PC-3 (cell line): ENCODE measurements at regions of chr4 and their contacts with region 1.

Region 1: DNA sequence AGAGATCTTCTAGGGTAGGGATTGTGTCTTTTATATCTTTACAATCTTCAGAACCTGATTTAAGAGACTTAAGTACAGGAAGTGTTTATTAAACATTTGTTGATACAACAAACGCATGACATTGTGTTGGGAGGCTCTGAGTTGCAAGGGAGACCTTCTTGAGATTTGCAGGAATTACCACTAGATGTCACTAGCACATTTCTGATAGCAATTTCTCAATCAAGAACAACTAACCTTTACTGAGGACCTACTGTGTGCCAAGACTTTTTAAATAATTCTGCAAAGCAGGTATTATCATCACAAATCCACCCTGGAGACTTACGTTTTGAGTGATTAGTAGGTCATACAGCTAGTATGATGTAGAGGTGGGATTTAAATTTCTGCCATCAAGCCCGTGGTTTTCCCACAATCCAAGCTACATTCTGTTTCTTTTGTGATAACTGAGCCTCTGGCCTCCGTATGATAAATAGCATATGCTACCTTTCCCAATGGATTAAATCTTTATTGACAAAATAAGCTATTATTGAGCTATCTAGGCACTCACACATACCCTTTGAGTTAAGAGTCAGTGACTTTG is 986.0 kb downstream of the CCSER1 start:
- DNase-seq: peak; percentile 50
- ATAC-seq: no peak; the same call in 1 of the 2 replicates
- H3K4me3 ChIP-seq: no peak overlapping the region
- H3K27ac ChIP-seq: no peak overlapping the region
- H3K4me1 ChIP-seq: no peaks in the 10 kb centered on the region
- H3K27me3 ChIP-seq: no peaks in the 10 kb centered on the region
- CTCF ChIP-seq: peak; percentile 78

Region 2: GRCh38 chr4:90357117-90357710 is 756.0 kb before region 1 on chr4:
- CTCF ChIA-PET with region 1: no interaction called
- POLR2A ChIA-PET with region 1: no interaction called
- intact Hi-C with region 1: loop called (anchors 5 kb)
- DNase-seq: peak; percentile 58
- ATAC-seq: peak; percentile 54
- H3K4me3 ChIP-seq: no peak overlapping the region; the same call in 1 of the 2 replicates
- H3K27ac ChIP-seq: no peak overlapping the region
- H3K4me1 ChIP-seq: no peaks in the 10 kb centered on the region
- H3K27me3 ChIP-seq: no peaks in the 10 kb centered on the region
- CTCF ChIP-seq: peak; percentile 83

Region 3: DNA sequence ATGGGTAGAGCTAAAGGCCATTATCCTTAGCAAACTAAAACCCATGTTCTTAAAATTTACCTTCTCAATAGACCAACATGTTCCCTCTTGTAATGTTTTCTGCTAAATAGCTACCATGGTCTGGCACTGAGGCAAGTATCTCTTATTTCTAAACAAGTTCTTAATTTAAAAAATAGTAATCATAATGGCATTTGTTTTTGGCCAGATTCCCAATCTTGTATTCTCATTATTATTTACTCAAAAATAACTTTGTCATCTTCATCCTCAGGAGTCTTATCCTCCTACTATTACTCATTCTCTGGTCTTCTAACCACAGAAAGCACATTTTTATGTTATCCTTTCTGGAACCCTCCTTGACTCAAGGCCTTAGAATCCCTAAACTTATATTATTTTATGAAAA is 54.9 kb before region 1 on chr4:
- CTCF ChIA-PET with region 1: no interaction called
- POLR2A ChIA-PET with region 1: no interaction called
- intact Hi-C with region 1: no loop called
- DNase-seq: peak; percentile 75
- ATAC-seq: no peak
- H3K4me3 ChIP-seq: no peak overlapping the region
- H3K27ac ChIP-seq: no peak overlapping the region
- H3K4me1 ChIP-seq: peaks cover 3% of the 10 kb centered on the region; the same call in 1 of the 2 replicates
- H3K27me3 ChIP-seq: no peaks in the 10 kb centered on the region
- CTCF ChIP-seq: no peak

Region 4: GRCh38 chr4:91502365-91502764 is 389.1 kb after region 1 on chr4:
- CTCF ChIA-PET with region 1: no interaction called
- POLR2A ChIA-PET with region 1: no interaction called
- intact Hi-C with region 1: loop called (anchors 1 kb)
- DNase-seq: peak; percentile 45
- ATAC-seq: no peak
- H3K4me3 ChIP-seq: no peak overlapping the region
- H3K27ac ChIP-seq: no peak overlapping the region
- H3K4me1 ChIP-seq: no peaks in the 10 kb centered on the region
- H3K27me3 ChIP-seq: no peaks in the 10 kb centered on the region
- CTCF ChIP-seq: peak; percentile 55

Region 5: GRCh38 chr4:92047209-92047875 is 934.1 kb after region 1 on chr4:
- CTCF ChIA-PET with region 1: no interaction called
- POLR2A ChIA-PET with region 1: no interaction called
- intact Hi-C with region 1: loop called (anchors 5 kb)
- DNase-seq: peak; percentile 38
- ATAC-seq: peak; percentile 61
- H3K4me3 ChIP-seq: no peak overlapping the region
- H3K27ac ChIP-seq: no peak overlapping the region
- H3K4me1 ChIP-seq: no peaks in the 10 kb centered on the region
- H3K27me3 ChIP-seq: no peaks in the 10 kb centered on the region
- CTCF ChIP-seq: peak; percentile 43

Region 6: DNA sequence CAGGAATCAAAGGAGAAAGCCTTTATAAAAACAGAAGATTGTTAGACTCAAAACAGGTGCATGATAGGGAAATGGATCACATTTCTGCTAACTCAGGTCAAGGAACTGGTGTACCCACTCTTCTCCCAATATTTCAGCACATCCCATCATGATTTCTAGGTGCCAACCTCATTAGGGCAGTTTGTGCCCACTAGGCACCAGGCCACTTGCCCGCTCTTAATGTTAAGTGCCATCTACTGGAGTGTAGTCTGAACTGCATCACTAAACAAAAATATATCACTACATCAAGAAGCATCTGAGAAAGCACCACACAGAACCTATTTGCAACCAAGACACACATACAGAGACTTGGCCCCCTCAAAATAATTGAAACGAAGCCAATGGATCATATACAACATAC is 1050.1 kb after region 1 on chr4:
- CTCF ChIA-PET with region 1: no interaction called
- POLR2A ChIA-PET with region 1: no interaction called
- intact Hi-C with region 1: loop called (anchors 10 kb)
- DNase-seq: peak; percentile 42
- ATAC-seq: no peak
- H3K4me3 ChIP-seq: no peak overlapping the region
- H3K27ac ChIP-seq: no peak overlapping the region
- H3K4me1 ChIP-seq: no peaks in the 10 kb centered on the region
- H3K27me3 ChIP-seq: no peaks in the 10 kb centered on the region
- CTCF ChIP-seq: peak; percentile 64